Lower lobe of right lung (tissue), 2 donors: ENCODE measurements at regions of chr5 and their contacts with region 1.

Region 1: DNA sequence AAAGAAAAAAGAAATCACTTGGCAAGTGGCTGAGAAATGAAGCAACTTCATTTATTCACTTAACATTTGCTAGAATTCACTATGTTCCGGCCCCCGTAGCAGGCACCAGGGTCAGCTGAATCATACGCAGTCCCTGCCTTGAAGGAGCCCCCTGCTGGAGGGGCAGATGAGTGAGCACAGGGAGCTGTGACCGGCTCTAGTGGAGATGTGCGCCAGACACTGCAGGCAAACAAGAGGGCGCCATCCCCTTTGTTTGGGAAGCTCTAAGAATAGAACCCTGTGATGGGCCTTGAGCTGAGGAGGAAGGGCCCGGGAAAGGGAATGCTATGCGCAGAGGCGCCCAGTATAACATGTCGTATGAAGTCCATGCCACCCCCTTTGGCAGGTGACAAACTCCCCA is 20.2 kb upstream of the RPL26L1 start:
- DNase-seq: no peak
- ATAC-seq: no peak
- H3K4me3 ChIP-seq: no peak overlapping the region
- H3K27ac ChIP-seq: no peak overlapping the region
- H3K4me1 ChIP-seq: peaks cover 14% of the 10 kb centered on the region
- H3K27me3 ChIP-seq: no peaks in the 10 kb centered on the region
- CTCF ChIP-seq: peak; percentile 12

Region 2: GRCh38 chr5:172714491-172715421 is 224.3 kb before region 1 on chr5:
- intact Hi-C with region 1: loop called (anchors 5 kb)
- DNase-seq: peak; percentile 91
- ATAC-seq: peak; percentile 76 to 90
- H3K4me3 ChIP-seq: no peak overlapping the region
- H3K27ac ChIP-seq: peak overlapping the region; percentile 87
- H3K4me1 ChIP-seq: peaks cover 53% of the 10 kb centered on the region
- H3K27me3 ChIP-seq: no peaks in the 10 kb centered on the region
- CTCF ChIP-seq: peak; percentile 93